ENCODE measurements at regions of chr7 and their contacts with region 1.

Region 1: GRCh38 chr7:33910756-33911155 is 5.4 kb downstream of the BMPER start:
- DNase-seq: no peak
- ATAC-seq: no peak

Region 2: DNA sequence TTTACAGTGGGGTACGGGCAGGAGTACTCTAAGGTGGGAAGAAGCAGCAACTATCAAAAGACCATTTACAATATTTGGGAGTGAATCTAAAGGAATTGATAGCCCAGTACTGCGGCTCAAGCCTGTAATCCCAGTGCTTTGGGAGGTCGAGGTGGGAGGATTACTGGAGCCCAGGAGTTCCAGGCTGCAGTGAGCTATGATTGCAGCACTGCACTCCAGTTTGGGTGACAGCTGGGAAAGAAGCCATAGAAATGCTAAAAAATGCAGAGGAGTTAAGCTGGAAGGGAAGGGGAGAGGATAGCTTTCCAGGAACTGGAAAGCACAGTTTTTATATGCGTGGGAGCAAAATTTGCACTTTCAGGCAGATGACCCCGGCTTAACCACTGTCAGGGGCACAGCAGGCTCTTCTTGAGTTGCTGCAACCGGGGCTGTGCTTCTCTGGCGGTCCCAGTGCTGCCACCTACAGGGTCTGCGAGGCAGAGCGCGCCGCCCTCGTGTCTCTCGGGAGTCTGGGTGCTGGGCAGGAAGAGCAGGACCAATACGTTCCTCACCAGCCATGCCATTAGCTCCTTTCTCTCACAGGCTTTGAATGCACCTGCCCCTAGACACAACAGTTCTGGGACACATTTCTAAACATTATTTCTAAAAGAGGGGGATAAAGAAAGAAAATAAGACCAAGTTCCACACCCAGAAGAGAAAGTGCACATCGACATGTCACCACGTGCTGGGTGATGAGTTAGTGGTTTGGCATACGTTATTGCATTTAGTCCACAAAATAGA is 15.5 kb before region 1 on chr7:
- intact Hi-C with region 1: no loop called
- DNase-seq: peak; percentile 90
- ATAC-seq: peak; percentile 96

Region 3: DNA sequence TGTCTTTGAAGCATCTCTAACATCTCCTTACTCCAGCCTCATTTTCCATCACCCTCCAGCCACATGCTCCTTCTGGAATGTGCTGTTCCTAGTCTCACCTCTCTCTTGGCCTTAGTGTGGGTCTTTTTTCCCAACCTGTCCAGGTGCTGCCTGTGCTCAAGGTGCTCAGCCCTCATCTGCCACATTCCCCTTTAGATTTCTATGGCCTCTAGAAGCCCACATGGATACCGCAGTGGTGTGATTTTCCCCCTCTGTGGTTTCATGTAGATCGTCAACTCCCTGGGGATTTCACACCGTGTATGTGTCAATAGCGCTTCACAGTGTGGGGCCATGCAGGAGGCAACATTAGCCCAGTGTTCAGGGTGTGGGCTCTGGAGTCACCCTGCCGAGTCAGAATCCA is 27.1 kb after region 1 on chr7:
- intact Hi-C with region 1: loop called (anchors 1 kb)
- DNase-seq: no peak
- ATAC-seq: no peak